Calu3 (cell line): ENCODE measurements at regions of chr16 and their contacts with region 1.

Region 1: GRCh38 chr16:75333721-75334163 is 82.3 kb upstream of the BCAR1 start:
- DNase-seq: no peak
- H3K4me3 Mint-ChIP-seq: no peak overlapping the region
- H3K27ac Mint-ChIP-seq: no peak overlapping the region
- H3K4me1 Mint-ChIP-seq: peaks cover 5% of the 10 kb centered on the region
- H3K27me3 Mint-ChIP-seq: no peaks in the 10 kb centered on the region
- CTCF ChIP-seq: no peak

Region 2: DNA sequence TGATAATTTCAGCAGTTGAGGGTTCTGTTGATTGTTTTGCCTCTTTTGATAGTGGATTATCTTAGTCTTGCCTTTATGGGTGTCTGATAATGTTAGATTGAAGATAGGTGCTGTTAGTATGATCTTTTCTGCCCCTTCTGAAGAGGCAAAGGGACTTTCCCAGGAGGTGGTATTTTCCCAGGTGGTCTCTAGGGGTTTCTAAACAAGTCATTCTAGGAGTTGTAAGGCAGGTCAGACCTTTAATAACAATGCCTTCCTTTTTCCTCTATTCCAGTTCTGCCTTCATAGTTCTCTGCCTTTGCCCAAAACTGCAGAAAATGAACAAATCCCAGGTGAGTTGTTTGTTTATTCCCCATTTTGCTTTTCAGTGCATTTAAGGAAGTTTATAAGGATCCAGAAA is 181.1 kb before region 1 on chr16:
- CTCF ChIA-PET with region 1: interaction called, 11 read pairs
- intact Hi-C with region 1: no loop called
- DNase-seq: no peak
- H3K4me3 Mint-ChIP-seq: no peak overlapping the region
- H3K27ac Mint-ChIP-seq: no peak overlapping the region
- H3K4me1 Mint-ChIP-seq: no peaks in the 10 kb centered on the region
- H3K27me3 Mint-ChIP-seq: no peaks in the 10 kb centered on the region
- CTCF ChIP-seq: no peak

Region 3: DNA sequence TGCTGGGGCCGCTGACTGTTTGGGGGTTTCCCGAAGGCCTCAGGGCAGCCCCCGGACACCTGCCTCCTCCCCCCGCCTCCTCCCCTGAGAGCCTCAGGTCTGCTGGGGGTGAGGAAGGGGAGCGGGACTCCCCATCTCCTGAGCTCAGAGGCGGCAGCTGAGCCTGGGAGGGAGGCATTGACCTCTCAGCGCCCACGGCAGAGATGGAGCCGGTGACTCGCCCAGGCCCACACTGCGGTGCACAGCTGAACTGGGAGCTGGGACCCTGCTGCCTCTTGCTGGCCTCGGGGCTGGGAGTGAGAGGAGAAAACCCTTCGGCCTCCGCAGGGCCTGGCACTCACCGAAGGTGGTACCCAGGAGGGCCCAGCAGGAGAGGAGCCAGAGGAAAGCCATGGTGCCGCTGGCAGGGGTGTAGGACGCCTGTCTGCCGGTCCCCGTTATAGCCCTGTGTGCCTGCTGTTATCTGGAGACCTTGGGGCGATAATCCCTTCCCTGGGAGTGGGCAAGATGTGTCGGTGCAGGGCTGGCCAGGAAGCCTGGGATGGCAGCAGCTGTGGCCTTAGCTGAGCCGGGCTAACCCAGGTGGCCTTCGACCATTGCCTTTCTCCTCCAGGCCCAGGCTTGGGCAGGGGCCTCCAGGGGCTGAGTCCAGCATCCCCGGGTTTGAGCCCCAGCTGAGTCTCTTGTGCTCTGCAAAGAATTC is 126.8 kb before region 1 on chr16 and contains the start of gene CTRB2:
- CTCF ChIA-PET with region 1: interaction called, 10 read pairs
- intact Hi-C with region 1: no loop called
- DNase-seq: no peak
- H3K4me3 Mint-ChIP-seq: no peak within 1 kb of the TSS
- H3K27ac Mint-ChIP-seq: no peak within 1 kb of the TSS
- H3K4me1 Mint-ChIP-seq: no peaks in the 10 kb centered on the region
- H3K27me3 Mint-ChIP-seq: no peaks in the 10 kb centered on the region
- CTCF ChIP-seq: no peak
- total RNA-seq, gene CTRB2: 0.76 TPM in 1 of 2 replicates, not detected in the other

Region 4: GRCh38 chr16:75351183-75351582 is 17.4 kb after region 1 on chr16:
- CTCF ChIA-PET with region 1: no interaction called
- intact Hi-C with region 1: no loop called
- DNase-seq: no peak
- H3K4me3 Mint-ChIP-seq: no peak overlapping the region
- H3K27ac Mint-ChIP-seq: no peak overlapping the region
- H3K4me1 Mint-ChIP-seq: no peaks in the 10 kb centered on the region
- H3K27me3 Mint-ChIP-seq: no peaks in the 10 kb centered on the region
- CTCF ChIP-seq: no peak

Region 5: DNA sequence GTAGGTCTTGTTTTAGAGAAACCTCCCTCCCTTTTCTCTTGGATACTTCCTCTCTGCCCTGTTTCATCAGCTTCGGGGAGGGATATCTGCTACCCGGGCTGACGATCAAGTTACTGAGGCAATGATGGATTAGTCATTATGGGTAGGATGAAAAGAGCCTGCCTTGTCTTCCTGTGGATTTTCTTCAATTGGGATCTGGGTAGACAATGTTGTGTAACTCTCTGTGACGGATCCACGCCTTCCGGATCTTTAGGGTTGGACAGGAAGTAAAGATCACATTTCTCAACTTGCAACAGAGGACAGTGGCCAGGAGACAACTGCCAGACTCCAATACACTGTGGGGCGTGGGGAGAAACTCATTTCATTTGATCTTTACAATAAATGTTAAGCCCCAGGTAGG is 172.8 kb after region 1 on chr16:
- CTCF ChIA-PET with region 1: no interaction called
- intact Hi-C with region 1: no loop called
- DNase-seq: peak; percentile 62
- H3K4me3 Mint-ChIP-seq: peak overlapping the region; percentile 6
- H3K27ac Mint-ChIP-seq: peak overlapping the region; percentile 91
- H3K4me1 Mint-ChIP-seq: peaks cover 17% of the 10 kb centered on the region
- H3K27me3 Mint-ChIP-seq: no peaks in the 10 kb centered on the region
- CTCF ChIP-seq: no peak